Right ventricle myocardium superior (tissue), 1 donor: ENCODE measurements at regions of chr2 and their contacts with region 1.

Region 1: DNA sequence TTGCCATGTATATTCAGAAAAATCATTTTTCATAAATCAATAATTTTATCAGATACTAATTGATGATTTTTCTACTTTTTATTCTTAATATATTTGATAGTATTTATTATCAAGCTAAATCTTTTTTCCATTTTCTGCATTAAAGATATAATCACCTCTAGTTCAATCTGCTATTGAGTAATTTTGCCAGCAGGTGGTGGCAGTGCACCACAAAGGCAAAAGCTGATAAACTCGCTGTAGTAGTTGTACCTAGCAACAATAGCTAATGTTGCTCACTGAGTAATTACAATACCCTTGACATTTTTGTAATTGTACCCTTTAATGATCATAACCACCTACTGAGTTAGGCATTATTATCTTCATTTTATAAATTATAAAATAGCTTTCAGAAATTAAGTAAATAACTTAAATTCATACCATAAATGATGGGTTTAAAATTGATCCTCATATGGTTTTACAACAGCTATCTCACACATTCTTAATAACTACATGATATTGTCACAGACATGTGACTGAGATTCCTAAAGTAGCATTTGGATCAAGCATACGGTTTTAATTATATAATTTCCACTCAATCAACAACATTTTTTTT is 52.0 kb upstream of the CALCRL start:
- DNase-seq: peak; percentile 50
- ATAC-seq: peak; percentile 89

Region 2: DNA sequence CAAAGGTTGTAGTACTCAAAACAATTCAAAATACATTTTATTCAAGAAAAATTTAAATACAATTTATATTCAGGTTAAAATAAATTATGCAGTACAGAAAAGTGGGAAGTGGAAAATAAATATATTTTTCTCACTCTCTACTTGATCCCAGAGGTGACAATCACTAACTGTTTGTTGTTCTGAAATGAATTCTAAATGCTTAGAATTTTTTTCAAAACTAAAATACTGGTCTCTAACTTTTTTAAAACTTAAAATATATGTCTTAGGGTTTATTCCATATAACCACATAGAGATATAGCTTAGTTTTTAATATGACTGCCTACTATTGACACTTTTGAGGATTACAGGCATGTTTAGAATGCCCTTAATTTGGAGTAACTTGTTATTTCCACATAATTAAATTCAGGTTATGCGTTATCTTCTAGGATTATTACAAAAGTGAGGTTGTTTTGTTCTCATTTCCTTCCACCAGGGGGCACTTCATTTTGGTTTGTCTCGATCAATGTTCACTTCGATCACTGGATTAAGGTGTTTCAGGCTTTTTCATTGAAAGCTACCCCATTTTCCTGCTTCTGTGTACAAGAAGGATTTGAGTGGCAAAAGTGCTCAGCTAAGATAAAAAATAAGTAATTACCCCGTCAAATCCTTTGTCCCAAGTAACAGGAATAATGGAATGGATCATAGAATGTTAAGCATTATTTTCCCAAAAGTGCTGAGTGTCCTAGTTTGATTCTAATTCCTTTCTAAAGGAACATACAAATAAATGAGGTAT is 81.3 kb after region 1 on chr2:
- intact Hi-C with region 1: loop called (anchors 2 kb)
- DNase-seq: no peak
- ATAC-seq: peak; percentile 68

Region 3: GRCh38 chr2:187618813-187619212 is 118.8 kb after region 1 on chr2:
- intact Hi-C with region 1: no loop called
- DNase-seq: no peak
- ATAC-seq: no peak

Region 4: DNA sequence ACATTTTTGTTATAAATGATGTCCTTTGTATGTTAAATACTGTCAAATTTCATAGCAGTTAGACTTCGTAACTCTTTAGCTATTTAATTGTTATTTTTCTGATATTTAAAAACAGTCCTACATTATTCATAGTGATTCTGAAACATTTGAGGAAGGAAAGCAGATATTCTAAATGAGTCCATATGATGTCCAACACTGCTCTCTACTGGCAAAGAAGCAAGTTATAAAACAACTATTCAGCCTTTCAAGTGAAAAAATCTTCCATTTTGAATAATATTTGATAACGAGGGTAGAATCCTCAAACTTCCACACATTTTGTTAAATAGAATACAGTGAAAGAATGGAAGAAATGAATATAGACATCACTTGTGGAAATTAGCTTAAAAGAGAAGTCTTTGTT is 1012.4 kb after region 1 on chr2:
- intact Hi-C with region 1: loop called (anchors 10 kb)
- DNase-seq: no peak
- ATAC-seq: peak; percentile 58